BJ (cell line): ENCODE measurements at regions of chr7 and their contacts with region 1.

Region 1: GRCh38 chr7:38660427-38661099 is 29.4 kb upstream of the AMPH start:
- DNase-seq: no peak
- H3K4me3 ChIP-seq: no peak overlapping the region
- H3K27me3 ChIP-seq: no peaks in the 10 kb centered on the region
- CTCF ChIP-seq: peak; percentile 85

Region 2: DNA sequence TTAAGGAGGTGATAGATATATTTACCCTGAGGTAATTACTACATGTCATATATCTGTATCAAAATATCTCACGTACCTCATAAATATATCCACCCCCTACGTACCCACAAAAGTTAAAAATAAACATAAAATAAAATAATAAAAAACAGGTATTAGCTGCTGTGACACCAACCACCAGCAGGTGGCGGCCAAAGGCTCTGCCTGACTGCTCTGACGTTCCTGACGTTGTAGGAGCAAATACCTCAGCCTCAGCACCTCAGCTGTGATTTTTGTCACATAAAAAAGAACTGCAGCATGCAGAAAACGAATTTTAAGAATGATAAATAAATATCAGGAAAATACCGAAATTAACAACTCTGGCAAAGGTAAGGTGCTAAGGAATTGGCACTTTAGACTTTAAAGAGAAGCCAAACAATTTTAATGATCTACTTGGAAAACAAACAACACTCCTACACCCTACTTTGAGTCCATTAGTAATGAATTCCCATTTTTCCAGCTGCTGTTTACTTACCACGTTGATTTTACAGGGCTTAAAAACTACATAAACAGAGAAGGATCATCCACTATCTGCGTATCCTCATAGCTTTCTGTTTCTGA is 261.7 kb before region 1 on chr7:
- CTCF ChIA-PET with region 1: interaction called, 37 read pairs
- POLR2A ChIA-PET with region 1: interaction called, 5 read pairs
- DNase-seq: no peak
- H3K4me3 ChIP-seq: no peak overlapping the region
- H3K27me3 ChIP-seq: no peaks in the 10 kb centered on the region; the same call in 1 of the 2 replicates
- CTCF ChIP-seq: peak; percentile 94

Region 3: GRCh38 chr7:38451840-38452239 is 208.7 kb before region 1 on chr7:
- CTCF ChIA-PET with region 1: interaction called, 22 read pairs
- POLR2A ChIA-PET with region 1: no interaction called
- DNase-seq: no peak
- H3K4me3 ChIP-seq: no peak overlapping the region
- H3K27me3 ChIP-seq: no peaks in the 10 kb centered on the region
- CTCF ChIP-seq: peak; percentile 39